Mucosa of descending colon (tissue), 3 donors: ENCODE measurements at regions of chr13 and their contacts with region 1.

Region 1: GRCh38 chr13:33931397-33932311 is 113.7 kb downstream of the RFC3 start:
- DNase-seq: peak in 1 of 3 donors; percentile 61
- ATAC-seq: peak; percentile 57
- H3K4me3 ChIP-seq: no peak overlapping the region
- H3K4me1 ChIP-seq: no peaks in the 10 kb centered on the region
- CTCF ChIP-seq: no peak

Region 2: GRCh38 chr13:35164324-35164932 is 1232.8 kb after region 1 on chr13:
- intact Hi-C with region 1: loop called in 1 of 2 experiments (anchors 2 kb)
- DNase-seq: no peak
- ATAC-seq: peak; percentile 50
- H3K4me3 ChIP-seq: no peak overlapping the region
- H3K4me1 ChIP-seq: no peaks in the 10 kb centered on the region
- CTCF ChIP-seq: no peak